ENCODE measurements at regions of chr5 and their contacts with region 1.

Region 1: GRCh38 chr5:141524604-141525597 is 36.0 kb downstream of the PCDHGC5 start:
- DNase-seq: peak; percentile 78
- CTCF ChIP-seq: peak; percentile 99

Region 2: DNA sequence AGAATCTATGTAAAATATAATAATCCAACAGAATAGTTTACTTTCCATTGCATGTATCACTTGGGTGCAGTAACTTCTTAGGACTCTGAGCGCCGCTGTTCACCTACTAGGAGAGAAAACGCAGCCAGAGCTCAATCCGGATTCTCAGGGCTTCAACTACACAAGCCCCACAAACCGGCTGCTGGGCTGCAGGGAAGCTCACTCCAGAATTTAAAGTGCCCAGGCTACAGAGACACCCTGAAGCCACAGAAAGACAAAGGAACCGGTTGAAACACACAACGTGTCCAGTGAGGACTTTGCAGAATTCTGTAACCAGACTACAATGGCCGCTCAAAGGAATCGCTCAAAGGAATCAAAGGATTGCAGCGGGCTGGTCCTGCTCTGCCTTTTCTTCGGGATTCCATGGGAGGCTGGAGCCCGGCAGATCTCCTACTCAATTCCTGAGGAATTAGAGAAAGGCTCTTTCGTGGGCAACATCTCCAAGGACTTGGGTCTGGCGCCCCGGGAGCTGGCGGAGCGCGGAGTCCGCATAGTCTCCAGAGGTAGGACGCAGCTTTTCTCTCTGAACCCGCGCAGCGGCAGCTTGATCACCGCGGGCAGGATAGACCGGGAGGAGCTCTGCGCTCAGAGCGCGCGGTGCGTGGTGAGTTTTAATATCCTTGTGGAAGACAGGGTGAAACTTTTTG is 111.9 kb before region 1 on chr5 and contains the start of gene PCDHGA10:
- CTCF ChIA-PET with region 1: interaction called, 127 read pairs
- POLR2A ChIA-PET with region 1: no interaction called
- DNase-seq: peak; percentile 73
- CTCF ChIP-seq: peak; percentile 77

Region 3: GRCh38 chr5:141475625-141476131 is 49.2 kb before region 1 on chr5 and contains the start of gene PCDHGC3:
- CTCF ChIA-PET with region 1: interaction called, 45 read pairs
- POLR2A ChIA-PET with region 1: no interaction called
- DNase-seq: peak; percentile 89
- CTCF ChIP-seq: peak; percentile 75

Region 4: DNA sequence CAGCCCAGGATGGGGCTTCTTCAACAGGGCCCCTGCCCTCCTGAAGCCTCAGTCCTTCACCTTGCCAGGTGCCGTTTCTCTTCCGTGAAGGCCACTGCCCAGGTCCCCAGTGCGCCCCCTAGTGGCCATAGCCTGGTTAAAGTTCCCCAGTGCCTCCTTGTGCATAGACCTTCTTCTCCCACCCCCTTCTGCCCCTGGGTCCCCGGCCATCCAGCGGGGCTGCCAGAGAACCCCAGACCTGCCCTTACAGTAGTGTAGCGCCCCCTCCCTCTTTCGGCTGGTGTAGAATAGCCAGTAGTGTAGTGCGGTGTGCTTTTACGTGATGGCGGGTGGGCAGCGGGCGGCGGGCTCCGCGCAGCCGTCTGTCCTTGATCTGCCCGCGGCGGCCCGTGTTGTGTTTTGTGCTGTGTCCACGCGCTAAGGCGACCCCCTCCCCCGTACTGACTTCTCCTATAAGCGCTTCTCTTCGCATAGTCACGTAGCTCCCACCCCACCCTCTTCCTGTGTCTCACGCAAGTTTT is 12.5 kb before region 1 on chr5:
- CTCF ChIA-PET with region 1: interaction called, 214 read pairs
- POLR2A ChIA-PET with region 1: interaction called, 3 read pairs
- DNase-seq: peak; percentile 85
- CTCF ChIP-seq: peak; percentile 79

Region 5: DNA sequence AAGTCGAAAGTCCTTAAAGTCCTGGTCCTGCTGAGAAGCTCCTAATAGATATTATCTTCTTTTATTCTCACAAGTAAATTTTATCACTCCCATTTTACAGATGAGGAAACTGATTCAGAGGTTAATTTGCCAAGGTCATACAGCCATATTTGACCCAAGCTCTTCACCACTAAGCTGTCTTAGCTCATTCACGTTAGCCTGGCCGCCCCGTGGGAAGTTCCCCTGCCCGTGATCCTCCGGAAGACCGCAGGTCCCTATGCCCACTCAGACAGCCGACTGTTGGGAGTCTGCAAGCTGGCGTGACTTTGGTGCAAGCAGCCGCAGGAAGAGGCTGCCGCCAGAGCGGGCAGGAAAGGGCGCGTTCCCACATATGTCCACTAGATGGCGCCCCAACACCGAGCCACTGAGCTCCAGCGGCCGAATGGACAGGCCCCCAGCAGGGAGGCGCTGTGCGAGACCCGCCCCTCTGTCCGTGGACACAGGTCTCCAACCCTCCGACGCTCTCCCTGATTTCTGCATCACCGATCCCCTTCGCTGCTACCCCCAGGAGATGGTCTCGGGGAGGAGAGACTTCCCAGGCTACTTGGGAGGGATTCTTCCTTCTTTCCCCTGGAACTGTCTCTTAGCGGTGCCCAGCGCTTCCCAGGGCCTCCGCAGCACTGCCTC is 167.1 kb after region 1 on chr5:
- CTCF ChIA-PET with region 1: no interaction called
- POLR2A ChIA-PET with region 1: no interaction called
- DNase-seq: peak; percentile 88
- CTCF ChIP-seq: peak; percentile 98

Measured in GM10248 (cell line).